ENCODE measurements at regions of chr3 and their contacts with region 1.

Region 1: GRCh38 chr3:179451265-179452175 is at the start of gene GNB4:
- DNase-seq: peak; percentile 34 to 88
- H3K4me3 ChIP-seq: peak within 1 kb of the TSS; percentile 85 to 98
- H3K27ac ChIP-seq: peak within 1 kb of the TSS; percentile 88 to 99
- H3K4me1 ChIP-seq: peaks cover 0 to 21% of the 10 kb centered on the region in 2 donors
- H3K27me3 ChIP-seq: no peaks in the 10 kb centered on the region
- CTCF ChIP-seq: no peak
- total RNA-seq, gene GNB4: 25.3 TPM

Region 2: GRCh38 chr3:179147873-179148615 is 303.5 kb before region 1 on chr3 and contains the start of gene PIK3CA:
- intact Hi-C with region 1: loop called (anchors 10 kb)
- DNase-seq: peak; percentile 90 to 98
- H3K4me3 ChIP-seq: peak within 1 kb of the TSS; percentile 95 to 97
- H3K27ac ChIP-seq: peak within 1 kb of the TSS; percentile 93 to 99
- H3K4me1 ChIP-seq: peaks cover 0 to 14% of the 10 kb centered on the region in 2 donors
- H3K27me3 ChIP-seq: no peaks in the 10 kb centered on the region
- CTCF ChIP-seq: no peak
- total RNA-seq, gene PIK3CA: 12.7 TPM

Region 3: GRCh38 chr3:179272385-179272784 is 179.1 kb before region 1 on chr3:
- intact Hi-C with region 1: no loop called
- DNase-seq: no peak
- H3K4me3 ChIP-seq: no peak overlapping the region
- H3K27ac ChIP-seq: no peak overlapping the region
- H3K4me1 ChIP-seq: no peaks in the 10 kb centered on the region
- H3K27me3 ChIP-seq: no peaks in the 10 kb centered on the region
- CTCF ChIP-seq: peak in 1 of 3 experiments; percentile 43

Region 4: DNA sequence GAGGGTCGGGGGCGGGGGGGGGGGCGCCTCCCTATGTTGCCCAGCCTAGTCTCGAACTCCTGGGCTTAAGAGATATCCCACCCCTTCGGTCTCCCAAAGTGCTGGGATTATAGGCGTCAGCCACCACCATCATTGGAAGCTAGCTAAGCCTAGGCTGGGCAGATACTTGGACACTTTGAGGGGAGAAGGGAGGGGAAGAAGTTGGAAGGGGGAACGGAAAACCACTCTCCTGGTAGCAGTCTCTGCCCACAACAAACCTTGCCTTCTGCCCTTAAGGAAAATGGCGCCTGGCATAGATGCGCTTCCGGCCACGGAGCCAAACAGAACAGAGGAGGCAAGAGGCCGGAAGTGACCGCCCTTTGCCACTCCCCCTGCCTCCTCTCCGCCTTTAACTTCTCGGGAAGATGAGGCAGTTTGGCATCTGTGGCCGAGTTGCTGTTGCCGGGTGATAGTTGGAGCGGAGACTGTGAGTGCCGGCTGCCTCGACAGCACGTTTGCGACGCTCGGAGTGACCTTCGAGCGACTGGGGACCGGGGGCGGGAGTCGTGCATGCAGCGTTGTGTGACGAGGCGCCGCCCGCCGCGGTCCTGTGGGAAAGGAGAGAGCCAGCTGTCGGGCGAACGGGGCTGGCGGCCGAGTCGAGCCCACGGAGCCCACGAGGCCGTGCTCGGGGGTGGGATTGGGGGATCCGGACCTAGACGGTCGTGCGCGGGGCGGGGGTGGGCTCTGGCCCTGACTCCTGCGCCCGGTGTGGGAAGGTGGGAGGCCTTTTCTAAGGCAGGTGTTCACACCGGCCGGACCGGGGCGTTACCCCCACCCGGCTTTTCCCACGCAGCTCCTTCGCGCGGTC is 104.0 kb before region 1 on chr3 and contains the start of gene MFN1:
- intact Hi-C with region 1: loop called (anchors 5 kb)
- DNase-seq: peak; percentile 90 to 98
- H3K4me3 ChIP-seq: peak within 1 kb of the TSS; percentile 75 to 93
- H3K27ac ChIP-seq: peak within 1 kb of the TSS; percentile 82 to 90
- H3K4me1 ChIP-seq: peaks cover 7 to 20% of the 10 kb centered on the region in 2 donors
- H3K27me3 ChIP-seq: no peaks in the 10 kb centered on the region
- CTCF ChIP-seq: no peak
- total RNA-seq, gene MFN1: 25.1 TPM

Region 5: DNA sequence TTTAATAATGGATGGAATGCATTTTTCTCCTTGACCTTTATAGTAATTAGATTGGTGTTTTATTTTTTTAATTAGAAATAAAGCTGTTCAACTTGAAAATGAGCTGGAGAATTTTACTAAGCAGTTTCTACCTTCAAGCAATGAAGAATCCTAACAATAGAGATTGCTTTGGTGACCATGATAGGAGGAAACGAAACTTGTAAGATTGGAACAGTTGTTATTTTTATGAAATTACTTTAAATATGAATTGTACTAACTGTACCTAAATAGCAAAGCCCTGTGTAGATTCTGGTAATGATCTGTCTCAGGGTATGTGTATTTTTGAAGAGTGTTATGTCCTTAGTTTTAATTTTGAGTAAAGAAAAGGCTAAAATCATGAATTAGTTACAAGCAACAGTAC is 59.6 kb before region 1 on chr3:
- intact Hi-C with region 1: no loop called
- DNase-seq: no peak
- H3K4me3 ChIP-seq: no peak overlapping the region
- H3K27ac ChIP-seq: no peak overlapping the region
- H3K4me1 ChIP-seq: no peaks in the 10 kb centered on the region
- H3K27me3 ChIP-seq: no peaks in the 10 kb centered on the region
- CTCF ChIP-seq: no peak

Region 6: DNA sequence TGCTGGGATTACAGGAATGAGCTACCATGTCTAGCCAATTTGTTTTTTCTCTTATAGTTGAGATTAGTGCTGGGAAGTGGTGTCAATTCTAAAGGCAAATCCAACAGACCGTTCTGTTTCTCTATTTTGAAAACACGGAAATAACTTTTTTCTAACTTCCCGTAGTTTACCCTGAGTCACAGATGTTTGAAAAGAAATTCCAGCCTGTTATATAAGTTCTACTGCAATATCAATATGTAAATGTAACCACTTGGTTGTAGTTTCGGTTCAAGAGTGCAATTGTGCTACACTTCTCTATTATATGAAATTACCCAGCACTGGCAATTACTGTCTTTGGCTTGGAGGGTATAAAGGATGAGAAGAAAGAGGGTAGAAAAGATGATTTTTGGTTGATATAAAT is 22.0 kb after region 1 on chr3:
- intact Hi-C with region 1: no loop called
- DNase-seq: no peak
- H3K4me3 ChIP-seq: no peak overlapping the region
- H3K27ac ChIP-seq: no peak overlapping the region
- H3K4me1 ChIP-seq: no peaks in the 10 kb centered on the region
- H3K27me3 ChIP-seq: no peaks in the 10 kb centered on the region
- CTCF ChIP-seq: no peak

Region 7: DNA sequence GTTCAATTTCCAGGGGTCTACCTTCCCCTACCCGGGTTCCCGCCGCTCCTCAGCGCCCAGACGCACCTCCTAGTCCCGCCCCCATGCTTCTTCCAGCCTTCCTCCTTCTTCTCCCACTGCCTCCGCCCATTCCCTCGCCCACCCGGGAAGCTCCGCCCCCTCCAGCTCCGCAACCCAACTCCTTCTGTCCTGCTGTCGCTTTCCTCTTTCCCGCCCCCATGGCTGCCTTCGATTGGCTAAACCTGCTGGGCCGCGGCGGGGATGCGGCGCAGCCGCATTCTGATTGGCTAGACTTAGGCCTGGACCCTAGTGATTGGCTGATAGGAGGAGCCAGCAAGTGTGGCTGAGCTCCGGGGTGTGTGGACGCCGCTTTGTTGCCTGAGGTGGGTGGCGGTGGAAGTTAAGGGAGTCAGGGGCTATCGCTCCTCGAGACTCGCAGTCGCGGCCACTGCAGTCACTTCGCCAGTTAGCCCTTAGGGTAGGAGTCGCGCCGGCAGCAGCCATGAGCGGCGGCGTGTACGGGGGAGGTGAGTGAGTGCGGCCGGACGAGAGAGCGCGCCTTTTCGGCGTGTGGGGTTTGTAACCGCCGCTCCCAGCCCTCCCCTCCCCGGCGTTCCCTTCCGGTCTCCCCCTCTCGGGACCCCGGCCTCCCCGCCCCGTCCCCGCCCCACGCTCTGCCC is 111.2 kb after region 1 on chr3 and contains the start of gene ACTL6A:
- intact Hi-C with region 1: loop called (anchors 1 kb)
- DNase-seq: peak; percentile 100
- H3K4me3 ChIP-seq: peak within 1 kb of the TSS; percentile 78 to 85
- H3K27ac ChIP-seq: peak within 1 kb of the TSS; percentile 70 to 84
- H3K4me1 ChIP-seq: peaks cover 0 to 3% of the 10 kb centered on the region in 2 donors
- H3K27me3 ChIP-seq: no peaks in the 10 kb centered on the region
- CTCF ChIP-seq: no peak
- total RNA-seq, gene ACTL6A: 23.9 TPM

Measured in ascending aorta (tissue), 2 donors.